AG04449 (cell line): ENCODE measurements at regions of chr14 and their contacts with region 1.

Region 1: DNA sequence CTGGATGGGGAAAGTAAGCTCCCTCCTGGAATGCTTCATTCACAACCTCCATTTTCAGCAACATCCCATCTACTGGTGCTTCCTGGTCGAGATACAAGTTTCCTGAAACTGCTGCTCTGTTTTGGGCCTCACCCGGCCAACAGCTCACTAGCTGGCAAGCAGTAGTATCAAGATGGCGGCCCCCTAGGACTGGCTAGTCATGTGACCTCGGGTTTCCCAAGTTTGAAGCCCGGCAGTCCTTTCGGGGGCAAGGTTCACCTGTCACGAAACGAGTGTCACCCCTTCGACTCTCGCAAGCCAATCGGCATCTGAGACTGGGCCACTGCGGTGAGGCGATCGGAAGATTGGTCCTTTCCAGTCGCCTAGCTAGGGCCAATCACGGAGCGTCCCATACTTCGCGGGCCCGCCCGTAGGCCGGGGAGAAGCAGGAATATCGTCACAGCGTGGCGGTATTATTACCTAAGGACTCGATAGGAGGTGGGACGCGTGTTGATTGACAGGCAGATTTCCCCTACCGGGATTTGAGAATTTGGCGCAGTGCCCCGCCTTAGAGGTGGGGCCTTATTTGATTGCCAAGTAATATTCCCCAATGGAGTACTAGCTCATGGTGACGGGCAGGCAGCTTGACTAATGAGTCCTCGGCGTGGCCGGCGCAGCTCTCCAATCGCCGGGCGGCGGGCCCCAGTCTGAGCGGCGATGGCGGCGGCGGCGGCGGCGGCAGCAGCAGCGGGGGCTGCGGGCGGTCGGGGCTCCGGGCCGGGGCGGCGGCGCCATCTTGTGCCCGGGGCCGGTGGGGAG is at the start of gene PABPN1:
- DNase-seq: peak; percentile 99
- H3K4me3 ChIP-seq: peak within 1 kb of the TSS; percentile 82
- CTCF ChIP-seq: no peak

Region 2: DNA sequence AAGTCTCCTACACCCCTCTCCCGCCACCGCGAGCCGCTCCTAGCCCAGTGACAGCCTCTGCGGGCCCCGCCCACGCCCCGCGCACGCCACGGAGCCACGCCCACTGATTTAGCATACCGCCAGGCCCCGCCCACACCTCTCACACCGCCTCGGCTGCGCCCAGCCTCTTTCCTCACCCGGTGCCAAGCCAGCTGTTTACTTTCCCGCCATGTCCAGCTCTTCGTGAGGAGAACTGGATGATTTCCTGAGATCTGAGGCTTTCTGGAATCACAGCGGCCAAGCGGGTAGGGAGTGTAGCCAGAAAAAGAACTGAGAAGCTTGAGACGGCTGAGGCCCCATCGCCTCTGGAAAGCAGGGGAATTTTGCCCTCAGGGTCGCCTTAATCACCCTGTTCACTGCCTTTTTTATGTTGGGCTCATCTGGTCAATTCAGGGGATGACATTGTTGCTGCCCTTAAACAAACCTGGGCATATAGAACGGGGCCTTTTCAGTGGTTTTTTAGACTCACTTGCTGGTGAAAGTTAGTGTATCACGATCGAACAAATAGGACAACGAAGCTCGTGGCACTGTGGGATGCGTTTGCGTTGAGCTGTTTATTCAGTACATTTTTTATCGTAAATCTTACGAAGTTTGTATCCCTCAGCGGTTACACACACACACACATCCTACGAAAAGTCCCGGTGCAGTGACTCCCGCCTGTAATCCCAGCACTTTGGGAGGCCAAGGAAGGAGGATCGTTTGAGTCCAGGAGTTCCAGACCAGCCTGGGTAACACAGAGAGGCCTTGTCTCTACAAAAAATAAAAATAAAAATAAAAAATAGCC is 83.0 kb before region 1 on chr14 and contains the start of gene RNF212B:
- CTCF ChIA-PET with region 1: no interaction called
- POLR2A ChIA-PET with region 1: no interaction called
- DNase-seq: no peak
- H3K4me3 ChIP-seq: peak within 1 kb of the TSS; percentile 40
- CTCF ChIP-seq: no peak

Region 3: DNA sequence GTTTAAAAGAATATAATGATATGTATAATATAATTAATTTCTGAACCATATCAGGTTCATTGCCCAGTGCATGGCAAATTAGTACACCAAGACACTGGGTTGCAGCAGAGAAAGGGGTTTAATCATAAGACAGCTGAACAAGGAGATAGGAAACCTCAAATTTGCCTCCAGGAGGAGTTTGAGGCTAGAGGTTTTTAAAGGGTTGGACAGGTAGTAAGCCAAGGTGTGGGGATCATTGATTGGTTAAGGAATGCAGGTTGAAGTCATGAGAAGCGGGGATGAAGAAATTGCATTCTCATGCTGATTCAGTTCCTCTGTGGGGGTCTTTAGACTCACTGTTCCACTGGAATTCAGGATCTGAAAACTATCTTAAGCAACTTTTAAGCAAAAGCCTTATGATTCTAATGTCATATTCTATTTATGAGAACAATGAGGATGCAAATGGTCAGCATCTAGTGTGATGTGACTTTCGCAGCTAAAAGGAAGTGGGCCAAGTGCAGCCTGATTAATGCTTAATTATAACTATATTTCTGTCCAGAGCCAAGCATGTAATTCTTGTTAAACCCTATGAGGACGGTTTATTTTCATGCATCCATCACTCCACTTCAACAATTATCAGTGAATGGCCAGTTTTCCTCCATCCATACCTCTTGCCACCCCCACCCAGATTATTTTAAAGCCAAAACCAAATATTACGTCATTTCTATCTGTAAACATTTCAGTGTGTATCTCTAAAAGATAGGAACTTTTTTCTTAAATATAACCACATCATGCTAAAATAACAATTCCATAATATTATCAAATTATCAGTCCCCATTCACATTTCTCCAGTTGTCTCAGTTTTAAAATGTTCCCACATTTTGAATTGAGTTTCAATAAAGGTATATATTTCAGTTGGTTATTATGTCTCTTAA is 68.3 kb before region 1 on chr14:
- CTCF ChIA-PET with region 1: no interaction called
- POLR2A ChIA-PET with region 1: no interaction called
- DNase-seq: no peak
- H3K4me3 ChIP-seq: no peak overlapping the region
- CTCF ChIP-seq: no peak

Region 4: GRCh38 chr14:23286020-23286905 is 34.7 kb before region 1 on chr14 and contains the start of gene HOMEZ:
- CTCF ChIA-PET with region 1: no interaction called
- POLR2A ChIA-PET with region 1: interaction called, 16 read pairs
- DNase-seq: peak; percentile 81
- H3K4me3 ChIP-seq: peak within 1 kb of the TSS; percentile 83
- CTCF ChIP-seq: peak; percentile 23

Region 5: GRCh38 chr14:23306410-23307145 is 14.4 kb before region 1 on chr14 and contains the start of gene BCL2L2:
- CTCF ChIA-PET with region 1: interaction called, 30 read pairs
- POLR2A ChIA-PET with region 1: interaction called, 34 read pairs
- DNase-seq: no peak
- H3K4me3 ChIP-seq: peak within 1 kb of the TSS; percentile 91
- CTCF ChIP-seq: no peak

Region 6: GRCh38 chr14:23352511-23353432 is 31.8 kb after region 1 on chr14 and contains the start of gene SLC22A17:
- CTCF ChIA-PET with region 1: interaction called, 4 read pairs
- POLR2A ChIA-PET with region 1: interaction called, 28 read pairs
- DNase-seq: peak; percentile 59
- H3K4me3 ChIP-seq: peak within 1 kb of the TSS; percentile 87
- CTCF ChIP-seq: peak; percentile 10

Region 7: GRCh38 chr14:23379366-23380196 is 58.6 kb after region 1 on chr14:
- CTCF ChIA-PET with region 1: interaction called, 303 read pairs
- POLR2A ChIA-PET with region 1: no interaction called
- DNase-seq: no peak
- H3K4me3 ChIP-seq: no peak overlapping the region
- CTCF ChIP-seq: peak; percentile 98